ENCODE measurements at regions of chr22 and their contacts with region 1.

Region 1: DNA sequence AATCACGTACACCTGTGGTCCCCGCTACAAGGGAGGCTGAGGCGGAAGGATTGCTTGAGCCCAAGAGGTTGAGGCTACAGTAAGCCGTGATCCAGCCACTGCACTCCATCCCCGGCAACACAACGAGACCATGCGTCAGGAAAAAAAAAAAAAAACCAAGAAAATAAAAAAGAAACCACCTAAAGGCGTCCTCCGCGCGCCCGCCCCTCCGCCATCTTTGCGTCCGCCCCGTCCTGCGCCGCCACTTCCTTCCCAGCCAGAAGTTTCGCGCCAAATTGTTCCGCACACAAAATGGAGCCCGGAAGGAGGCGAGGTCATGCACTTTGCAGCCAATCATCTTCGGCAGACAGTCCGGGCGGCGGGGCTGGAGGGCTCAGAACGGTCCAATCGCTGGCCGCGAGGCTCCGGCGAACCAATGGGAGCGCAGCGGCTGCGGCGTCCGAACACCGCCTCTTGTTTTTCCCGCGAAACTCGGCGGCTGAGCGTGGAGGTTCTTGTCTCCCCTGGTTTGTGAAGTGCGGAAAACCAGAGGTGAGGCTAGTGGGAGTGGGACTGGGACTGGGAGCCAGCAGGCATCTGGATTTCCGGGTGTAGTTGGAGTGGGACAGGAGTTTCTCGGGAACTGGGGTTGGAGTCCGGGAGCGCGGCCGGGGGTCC is at the start of gene MCM5:
- DNase-seq: peak; percentile 96 to 98
- ATAC-seq: peak; percentile 98 to 99 (median 99)
- H3K4me3 ChIP-seq: peak within 1 kb of the TSS; percentile 70 to 94 (median 80)
- H3K27ac ChIP-seq: peak within 1 kb of the TSS in 9 of 10 donors; percentile 46 to 88 (median 71)
- H3K4me1 ChIP-seq: peaks cover 0 to 40% (median 11%) of the 10 kb centered on the region in 9 donors
- H3K27me3 ChIP-seq: no peaks in the 10 kb centered on the region
- CTCF ChIP-seq: peak in 1 of 9 donors; percentile 5
- total RNA-seq, gene MCM5: 7.0 to 21.4 (median 11.2) TPM

Region 2: DNA sequence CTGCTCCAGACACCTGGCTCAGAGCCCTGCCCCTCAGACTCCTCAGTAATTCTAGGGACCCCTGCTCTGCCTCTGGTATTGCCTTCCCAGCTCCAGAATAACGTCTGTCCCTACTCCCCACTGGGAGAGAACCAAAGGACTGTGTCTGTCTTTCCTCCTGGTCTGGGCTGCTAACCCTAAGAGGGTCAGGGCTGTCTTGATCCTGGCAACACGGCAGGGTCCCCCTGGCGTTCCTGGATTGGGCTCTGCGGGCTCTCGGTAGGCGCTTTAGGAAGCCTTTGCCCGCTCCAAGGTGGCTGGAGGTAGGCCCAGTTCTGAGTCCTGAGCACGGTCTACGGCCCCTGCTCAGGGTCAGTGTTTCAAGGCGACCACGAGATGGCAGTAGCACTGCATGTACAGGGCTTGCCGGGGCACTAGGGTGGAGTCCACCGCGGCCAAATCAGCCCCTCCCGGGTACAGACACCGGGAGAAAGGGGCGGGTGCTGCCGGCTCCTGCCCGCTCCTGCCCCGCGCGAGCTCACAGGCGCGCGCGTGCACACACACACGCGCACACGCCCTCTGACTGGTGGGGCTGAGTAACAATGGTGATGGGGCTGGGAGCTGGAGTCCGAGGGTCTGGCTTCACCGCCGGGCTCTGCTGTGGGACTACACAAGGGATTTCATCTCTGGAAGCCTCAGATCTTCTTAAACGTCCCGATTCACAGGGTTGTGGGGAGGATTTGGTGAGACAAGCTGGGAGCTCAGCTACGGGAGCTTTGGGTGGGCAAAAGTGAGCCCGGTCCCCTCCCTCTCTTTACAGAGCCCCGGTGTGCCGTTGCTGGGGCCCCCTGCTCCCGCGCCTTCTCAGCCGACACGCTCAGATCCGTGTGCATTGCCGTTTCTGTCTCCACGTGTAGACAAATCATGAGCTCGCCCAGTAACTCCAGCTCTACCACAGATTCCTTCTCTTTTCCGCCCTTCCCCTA is 49.0 kb before region 1 on chr22:
- intact Hi-C with region 1: loop called in 1 of 10 experiments (anchors 10 kb)
- DNase-seq: peak; percentile 92 to 93
- ATAC-seq: peak; percentile 85 to 92 (median 90)
- H3K4me3 ChIP-seq: peak overlapping the region in 9 of 10 donors; percentile 39 to 65 (median 61)
- H3K27ac ChIP-seq: peak overlapping the region in 8 of 10 donors; percentile 53 to 90 (median 73)
- H3K4me1 ChIP-seq: peaks cover 0 to 48% (median 13%) of the 10 kb centered on the region in 9 donors
- H3K27me3 ChIP-seq: no peaks in the 10 kb centered on the region
- CTCF ChIP-seq: peak; percentile 75 to 97 (median 94)

Region 3: GRCh38 chr22:35376728-35377472 is 22.9 kb before region 1 on chr22:
- intact Hi-C with region 1: no loop called
- DNase-seq: peak; percentile 83 to 95
- ATAC-seq: peak; percentile 32 to 79 (median 62)
- H3K4me3 ChIP-seq: no peak overlapping the region
- H3K27ac ChIP-seq: peak overlapping the region in 9 of 10 donors; percentile 17 to 93 (median 70)
- H3K4me1 ChIP-seq: peaks cover 3 to 83% (median 33%) of the 10 kb centered on the region in 9 donors
- H3K27me3 ChIP-seq: no peaks in the 10 kb centered on the region
- CTCF ChIP-seq: no peak

Measured in heart right ventricle (tissue), 16 donors.